Activated CD4-positive, alpha-beta memory T cell treated with anti-CD3 and anti-CD28 coated beads for 36 hours (primary cell): ENCODE measurements at regions of chr12 and their contacts with region 1.

Region 1: DNA sequence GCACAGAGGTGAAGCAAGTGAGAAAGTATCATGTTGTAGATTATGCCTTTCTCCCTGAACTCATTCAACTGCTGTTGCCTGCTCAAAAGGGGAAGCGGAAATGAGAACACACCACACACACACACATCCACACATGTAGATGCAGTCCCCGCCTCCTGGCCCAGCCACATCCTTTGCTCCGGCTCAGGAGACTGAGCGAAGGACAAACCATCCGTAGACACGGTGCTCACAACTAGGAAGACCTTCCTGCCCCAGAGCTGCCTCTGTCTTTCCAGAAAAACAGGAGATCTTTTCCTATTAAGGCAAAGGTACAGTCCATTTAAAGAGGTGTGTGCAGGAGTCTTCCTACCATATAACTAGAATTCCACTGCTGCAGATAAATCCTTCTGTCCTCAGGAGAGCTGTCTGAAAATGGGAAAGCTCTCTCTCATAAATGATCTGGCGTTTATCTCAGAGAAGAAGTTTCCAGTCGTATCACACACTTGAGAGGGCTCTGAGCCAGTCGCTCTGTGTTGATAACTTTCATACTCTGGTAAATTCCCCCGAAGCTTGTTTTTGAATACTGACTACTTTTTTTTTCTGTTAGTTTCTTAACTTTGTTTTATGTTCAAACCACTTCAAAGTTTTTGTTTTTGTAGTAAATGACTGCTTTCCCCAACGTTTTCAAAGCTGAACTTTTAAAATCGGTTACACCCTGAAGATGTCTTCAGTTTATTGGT is at the start of gene TESPA1:
- DNase-seq: peak; percentile 93
- H3K4me3 Mint-ChIP-seq: peak within 1 kb of the TSS; percentile 79
- H3K27ac Mint-ChIP-seq: peak within 1 kb of the TSS; percentile 90
- H3K4me1 Mint-ChIP-seq: peaks cover 68% of the 10 kb centered on the region
- H3K27me3 Mint-ChIP-seq: no peaks in the 10 kb centered on the region
- total RNA-seq, gene TESPA1: 73.9 to 74.8 TPM

Region 2: GRCh38 chr12:54497883-54498282 is 486.9 kb before region 1 on chr12:
- CTCF ChIA-PET with region 1: no interaction called
- POLR2A ChIA-PET with region 1: no interaction called
- intact Hi-C with region 1: loop called (anchors 5 kb)
- DNase-seq: no peak
- H3K4me3 Mint-ChIP-seq: peak overlapping the region; percentile 100
- H3K27ac Mint-ChIP-seq: peak overlapping the region; percentile 98
- H3K4me1 Mint-ChIP-seq: peaks cover 40% of the 10 kb centered on the region
- H3K27me3 Mint-ChIP-seq: no peaks in the 10 kb centered on the region

Region 3: GRCh38 chr12:54967461-54967860 is 17.4 kb before region 1 on chr12:
- CTCF ChIA-PET with region 1: interaction called, 5 read pairs
- POLR2A ChIA-PET with region 1: interaction called, 4 read pairs
- intact Hi-C with region 1: loop called (anchors 1 kb)
- DNase-seq: peak; percentile 24
- H3K4me3 Mint-ChIP-seq: no peak overlapping the region
- H3K27ac Mint-ChIP-seq: peak overlapping the region; percentile 60
- H3K4me1 Mint-ChIP-seq: peaks cover 73% of the 10 kb centered on the region
- H3K27me3 Mint-ChIP-seq: no peaks in the 10 kb centered on the region

Region 4: GRCh38 chr12:55019779-55020178 is 35.0 kb after region 1 on chr12 and contains the start of gene NEUROD4:
- CTCF ChIA-PET with region 1: no interaction called
- POLR2A ChIA-PET with region 1: no interaction called
- intact Hi-C with region 1: no loop called
- DNase-seq: peak; percentile 32
- H3K4me3 Mint-ChIP-seq: no peak within 1 kb of the TSS
- H3K27ac Mint-ChIP-seq: no peak within 1 kb of the TSS
- H3K4me1 Mint-ChIP-seq: peaks cover 5% of the 10 kb centered on the region
- H3K27me3 Mint-ChIP-seq: peaks cover 35% of the 10 kb centered on the region
- total RNA-seq, gene NEUROD4: not detected

Region 5: DNA sequence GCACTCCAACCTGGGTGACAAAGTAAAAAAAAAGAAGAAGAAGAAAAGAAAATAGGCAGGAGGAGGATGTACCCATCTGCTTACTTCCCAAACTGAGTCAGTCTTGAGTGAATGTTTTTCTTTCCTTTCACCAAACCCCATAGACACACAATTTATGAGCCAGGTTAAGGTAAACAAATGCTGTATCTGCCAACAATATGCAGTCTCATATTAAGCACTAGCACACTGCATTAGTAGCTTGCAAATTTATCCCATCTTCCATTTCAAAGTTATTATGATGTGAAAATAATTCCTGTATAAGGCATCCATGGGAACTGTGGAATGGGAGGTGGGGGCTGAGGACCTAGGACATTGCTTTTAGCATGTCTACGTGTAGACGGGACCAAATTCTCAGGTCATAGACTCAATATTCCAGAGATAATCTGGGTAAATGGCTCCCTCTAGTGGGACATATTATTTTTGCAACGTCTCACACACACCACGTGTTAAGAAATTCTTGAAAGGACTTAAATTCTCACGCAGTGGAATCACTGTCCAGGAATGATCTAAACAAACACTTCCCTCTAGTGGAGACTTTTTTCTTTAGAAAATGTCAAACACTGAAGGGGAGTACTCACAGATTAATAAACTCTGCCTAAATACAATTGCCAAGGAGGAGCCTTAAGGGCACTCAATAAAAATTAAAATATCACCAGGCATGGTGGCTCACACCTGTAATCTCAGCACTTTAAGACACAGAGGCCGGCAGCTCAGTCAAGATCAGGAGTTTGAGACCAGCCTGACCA is 634.7 kb after region 1 on chr12:
- CTCF ChIA-PET with region 1: no interaction called
- POLR2A ChIA-PET with region 1: no interaction called
- intact Hi-C with region 1: loop called (anchors 10 kb)
- DNase-seq: no peak
- H3K4me3 Mint-ChIP-seq: no peak overlapping the region
- H3K27ac Mint-ChIP-seq: no peak overlapping the region
- H3K4me1 Mint-ChIP-seq: peaks cover 9% of the 10 kb centered on the region
- H3K27me3 Mint-ChIP-seq: peaks cover 29% of the 10 kb centered on the region

Region 6: GRCh38 chr12:55715833-55716581 is 731.2 kb after region 1 on chr12 and contains the start of gene BLOC1S1:
- CTCF ChIA-PET with region 1: no interaction called
- POLR2A ChIA-PET with region 1: no interaction called
- intact Hi-C with region 1: loop called (anchors 5 kb)
- DNase-seq: peak; percentile 96
- H3K4me3 Mint-ChIP-seq: peak within 1 kb of the TSS; percentile 90
- H3K27ac Mint-ChIP-seq: peak within 1 kb of the TSS; percentile 89
- H3K4me1 Mint-ChIP-seq: peaks cover 30% of the 10 kb centered on the region
- H3K27me3 Mint-ChIP-seq: peaks cover 2% of the 10 kb centered on the region
- total RNA-seq, gene BLOC1S1: 153 to 162 TPM

Region 7: GRCh38 chr12:55931780-55932550 is 947.1 kb after region 1 on chr12:
- CTCF ChIA-PET with region 1: no interaction called
- POLR2A ChIA-PET with region 1: no interaction called
- intact Hi-C with region 1: loop called (anchors 2 kb)
- DNase-seq: peak; percentile 47
- H3K4me3 Mint-ChIP-seq: peak overlapping the region; percentile 96
- H3K27ac Mint-ChIP-seq: peak overlapping the region; percentile 98
- H3K4me1 Mint-ChIP-seq: peaks cover 55% of the 10 kb centered on the region
- H3K27me3 Mint-ChIP-seq: no peaks in the 10 kb centered on the region